MCF 10A (cell line): ENCODE measurements at regions of chr12 and their contacts with region 1.

Region 1: DNA sequence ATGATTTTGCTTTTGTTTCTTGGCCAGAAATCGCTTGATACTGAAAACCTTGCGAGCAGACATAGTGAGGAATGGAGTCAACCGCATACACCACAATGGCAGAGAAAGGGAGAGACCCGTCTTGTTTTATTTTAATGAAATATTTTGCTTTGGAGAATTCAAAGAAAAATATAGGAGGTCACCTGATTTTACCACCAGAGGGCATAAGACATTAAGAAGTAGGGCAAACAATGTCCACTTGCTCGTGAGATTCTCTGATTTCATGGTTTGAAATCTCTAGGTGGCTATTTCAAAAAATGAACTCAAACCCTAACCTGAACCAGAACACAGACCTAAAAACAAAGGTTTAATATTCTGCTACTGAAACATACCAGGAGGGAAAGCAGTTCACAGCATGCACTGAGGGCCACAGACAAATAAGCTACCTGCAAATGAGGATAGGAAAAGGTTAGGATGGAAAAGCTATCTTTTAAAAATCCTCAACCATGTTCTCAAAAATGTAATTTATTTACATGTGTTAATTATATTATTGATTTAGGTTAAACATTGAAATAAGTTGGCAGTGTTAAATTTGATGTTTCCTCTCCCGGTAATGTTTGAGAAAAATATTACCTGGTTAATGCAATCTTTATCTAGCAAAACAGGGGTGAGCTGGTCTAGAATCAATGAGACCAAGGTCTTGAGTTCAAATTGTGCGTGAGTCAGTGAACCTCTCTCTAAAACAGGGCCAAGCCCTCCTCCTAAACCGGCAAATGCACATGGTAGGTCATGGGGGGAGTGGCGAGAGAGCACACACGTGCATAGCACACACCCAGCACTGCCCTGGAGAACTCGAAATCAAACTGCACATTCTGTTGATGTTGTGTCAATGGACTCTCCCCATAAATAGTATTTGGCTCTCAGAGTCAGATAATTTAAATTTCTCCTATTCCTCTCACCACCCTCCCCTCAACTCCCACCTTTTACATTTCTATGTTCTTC is 12.5 kb downstream of the IFNG-AS1 start:
- DNase-seq: peak; percentile 40
- H3K4me3 Mint-ChIP-seq: no peak overlapping the region
- H3K27ac Mint-ChIP-seq: no peak overlapping the region
- H3K4me1 Mint-ChIP-seq: peaks cover 3% of the 10 kb centered on the region
- H3K27me3 Mint-ChIP-seq: no peaks in the 10 kb centered on the region
- CTCF ChIP-seq: peak; percentile 39

Region 2: GRCh38 chr12:68012712-68013111 is 10.9 kb after region 1 on chr12:
- CTCF ChIA-PET with region 1: interaction called, 10 read pairs
- POLR2A ChIA-PET with region 1: no interaction called
- intact Hi-C with region 1: no loop called
- DNase-seq: no peak
- H3K4me3 Mint-ChIP-seq: no peak overlapping the region
- H3K27ac Mint-ChIP-seq: no peak overlapping the region
- H3K4me1 Mint-ChIP-seq: peaks cover 2% of the 10 kb centered on the region
- H3K27me3 Mint-ChIP-seq: no peaks in the 10 kb centered on the region
- CTCF ChIP-seq: no peak

Region 3: DNA sequence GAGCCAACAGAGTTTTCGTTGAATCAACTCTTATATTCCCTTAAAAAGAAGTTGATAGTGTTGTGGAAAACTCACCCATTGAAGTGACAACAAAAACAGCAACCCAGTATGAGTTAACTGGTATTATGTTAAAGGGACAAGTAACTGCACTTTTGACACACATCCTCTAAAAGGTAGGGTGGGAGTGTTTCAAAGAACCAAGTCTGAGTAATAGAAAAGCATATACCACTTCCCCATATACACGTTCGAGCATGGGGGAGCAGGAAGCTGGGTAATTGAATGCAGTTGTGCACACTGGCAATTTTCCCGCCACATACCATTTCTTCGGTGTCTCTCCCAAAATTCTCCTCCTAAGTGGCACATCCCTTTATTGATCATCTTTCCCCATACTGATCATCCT is 18.9 kb after region 1 on chr12:
- CTCF ChIA-PET with region 1: interaction called, 10 read pairs
- POLR2A ChIA-PET with region 1: interaction called, 3 read pairs
- intact Hi-C with region 1: no loop called
- DNase-seq: no peak
- H3K4me3 Mint-ChIP-seq: no peak overlapping the region
- H3K27ac Mint-ChIP-seq: no peak overlapping the region
- H3K4me1 Mint-ChIP-seq: no peaks in the 10 kb centered on the region
- H3K27me3 Mint-ChIP-seq: no peaks in the 10 kb centered on the region
- CTCF ChIP-seq: no peak